Brain microvascular endothelial cell (primary cell): ENCODE measurements at regions of chr1 and their contacts with region 1.

Region 1: GRCh38 chr1:171984850-171985485 is 143.7 kb downstream of the DNM3 start:
- DNase-seq: no peak
- H3K4me3 ChIP-seq: no peak overlapping the region
- H3K27ac ChIP-seq: no peak overlapping the region
- H3K27me3 ChIP-seq: no peaks in the 10 kb centered on the region
- CTCF ChIP-seq: peak; percentile 81

Region 2: DNA sequence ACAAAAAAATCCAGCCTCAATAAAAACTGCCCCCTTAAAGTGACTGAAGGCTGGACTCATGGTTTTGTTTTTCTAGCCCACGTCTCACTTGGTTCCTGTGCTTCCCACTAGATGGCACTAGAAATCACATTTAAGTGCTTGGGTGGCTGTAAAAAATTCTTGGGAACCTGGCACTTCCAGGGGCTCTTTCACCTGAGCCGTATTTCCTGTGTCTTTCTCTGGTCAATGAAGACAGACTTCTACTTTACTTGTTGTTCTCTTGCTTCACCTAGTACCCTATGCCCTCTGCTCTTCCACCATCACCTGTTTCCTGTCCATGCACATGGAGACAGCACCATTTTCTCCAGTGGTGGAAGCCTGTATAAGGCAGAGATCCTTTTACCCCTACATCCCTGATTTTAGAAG is 183.5 kb before region 1 on chr1:
- in situ Hi-C with region 1: loop called (anchors 10 kb)
- DNase-seq: peak; percentile 9
- H3K4me3 ChIP-seq: no peak overlapping the region
- H3K27ac ChIP-seq: no peak overlapping the region
- H3K27me3 ChIP-seq: no peaks in the 10 kb centered on the region
- CTCF ChIP-seq: peak; percentile 85

Region 3: GRCh38 chr1:172095846-172096245 is 110.9 kb after region 1 on chr1:
- in situ Hi-C with region 1: no loop called
- DNase-seq: no peak
- H3K4me3 ChIP-seq: no peak overlapping the region
- H3K27ac ChIP-seq: no peak overlapping the region
- H3K27me3 ChIP-seq: no peaks in the 10 kb centered on the region
- CTCF ChIP-seq: no peak